ENCODE measurements at regions of chr11 and their contacts with region 1.

Region 1: GRCh38 chr11:21254790-21255189 is 585.4 kb downstream of the NELL1 start:
- DNase-seq: no peak
- H3K4me3 ChIP-seq: no peak overlapping the region
- H3K27ac ChIP-seq: no peak overlapping the region
- H3K4me1 ChIP-seq: no peaks in the 10 kb centered on the region
- H3K27me3 ChIP-seq: no peaks in the 10 kb centered on the region
- CTCF ChIP-seq: no peak

Region 2: GRCh38 chr11:21169639-21170038 is 85.2 kb before region 1 on chr11:
- CTCF ChIA-PET with region 1: no interaction called
- dilution Hi-C with region 1: loop called (anchors 5 kb)
- in situ Hi-C with region 1: no loop called
- intact Hi-C with region 1: no loop called
- DNase-seq: no peak
- H3K4me3 ChIP-seq: no peak overlapping the region
- H3K27ac ChIP-seq: no peak overlapping the region
- H3K4me1 ChIP-seq: no peaks in the 10 kb centered on the region
- H3K27me3 ChIP-seq: no peaks in the 10 kb centered on the region
- CTCF ChIP-seq: no peak

Region 3: DNA sequence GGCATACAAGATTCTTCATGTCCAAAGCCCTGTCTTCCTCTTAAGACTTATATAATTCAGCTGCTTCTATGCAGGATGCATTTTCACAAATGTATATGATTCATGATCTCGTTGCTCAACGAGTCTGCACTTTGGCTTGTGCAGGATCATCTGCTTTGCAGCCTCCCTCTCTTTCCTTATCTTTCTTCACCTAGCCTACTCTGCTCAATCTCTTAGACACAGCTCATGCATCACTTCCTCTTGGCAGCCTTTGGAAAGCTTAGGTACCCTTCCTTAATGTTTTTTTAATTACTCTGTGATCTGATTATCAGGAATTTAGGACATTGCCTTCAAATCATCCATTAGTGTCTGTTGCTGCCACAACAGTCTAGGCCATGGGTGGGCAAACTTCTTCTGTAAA is 88.4 kb after region 1 on chr11:
- CTCF ChIA-PET with region 1: no interaction called
- dilution Hi-C with region 1: no loop called
- in situ Hi-C with region 1: no loop called
- intact Hi-C with region 1: no loop called
- DNase-seq: no peak
- H3K4me3 ChIP-seq: no peak overlapping the region
- H3K27ac ChIP-seq: no peak overlapping the region
- H3K4me1 ChIP-seq: no peaks in the 10 kb centered on the region
- H3K27me3 ChIP-seq: no peaks in the 10 kb centered on the region
- CTCF ChIP-seq: no peak

Measured in mammary epithelial cell (primary cell).